Activated CD4-positive, alpha-beta T cell treated with anti-CD3 and anti-CD28 coated beads, Interleukin-2, amount 10 ng/mL, durations not matched to agents 24 days and 14 days (primary cell): ENCODE measurements at regions of chr14 and their contacts with region 1.

Region 1: DNA sequence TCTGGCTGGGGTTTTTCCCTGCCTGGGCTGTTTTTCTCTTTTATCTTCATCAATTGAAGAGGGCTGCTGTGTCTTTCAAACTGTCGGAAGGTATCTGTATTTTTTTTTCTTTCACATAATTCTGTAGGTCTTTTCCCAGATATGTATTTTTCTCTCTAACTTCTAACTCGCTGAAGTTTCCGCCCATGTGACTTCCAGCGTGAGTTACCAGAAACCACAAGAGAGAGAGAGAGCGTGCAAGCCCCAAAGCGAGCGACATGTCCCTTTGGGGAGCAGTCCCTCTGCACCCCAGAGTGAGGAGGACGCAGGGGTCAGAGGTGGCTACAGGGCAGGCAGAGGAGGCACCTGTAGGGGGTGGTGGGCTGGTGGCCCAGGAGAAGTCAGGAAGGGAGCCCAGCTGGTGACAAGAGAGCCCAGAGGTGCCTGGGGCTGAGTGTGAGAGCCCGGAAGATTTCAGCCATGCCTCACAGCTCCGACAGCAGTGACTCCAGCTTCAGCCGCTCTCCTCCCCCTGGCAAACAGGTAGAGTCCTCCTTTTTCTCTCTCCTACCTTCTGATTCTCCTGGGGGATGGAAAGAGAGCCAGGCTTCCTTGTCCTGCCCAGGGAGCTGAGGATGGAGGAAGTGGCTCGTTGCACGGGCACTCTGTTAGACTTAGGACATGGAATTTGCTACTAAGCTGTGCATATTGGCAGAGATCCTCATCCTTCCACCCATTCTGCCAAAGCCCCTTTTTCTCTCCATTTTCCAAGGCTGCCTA is at the start of gene BATF:
- DNase-seq: peak; percentile 95
- H3K4me3 Mint-ChIP-seq: peak within 1 kb of the TSS; percentile 100
- H3K27ac Mint-ChIP-seq: peak within 1 kb of the TSS; percentile 100
- H3K4me1 Mint-ChIP-seq: peaks cover 63% of the 10 kb centered on the region
- H3K27me3 Mint-ChIP-seq: no peaks in the 10 kb centered on the region
- total RNA-seq, gene BATF: 175 and 178 TPM in 2 replicates

Region 2: GRCh38 chr14:75469606-75470237 is 52.7 kb before region 1 on chr14:
- intact Hi-C with region 1: no loop called
- DNase-seq: no peak
- H3K4me3 Mint-ChIP-seq: no peak overlapping the region
- H3K27ac Mint-ChIP-seq: no peak overlapping the region
- H3K4me1 Mint-ChIP-seq: peaks cover 6% of the 10 kb centered on the region
- H3K27me3 Mint-ChIP-seq: no peaks in the 10 kb centered on the region

Region 3: DNA sequence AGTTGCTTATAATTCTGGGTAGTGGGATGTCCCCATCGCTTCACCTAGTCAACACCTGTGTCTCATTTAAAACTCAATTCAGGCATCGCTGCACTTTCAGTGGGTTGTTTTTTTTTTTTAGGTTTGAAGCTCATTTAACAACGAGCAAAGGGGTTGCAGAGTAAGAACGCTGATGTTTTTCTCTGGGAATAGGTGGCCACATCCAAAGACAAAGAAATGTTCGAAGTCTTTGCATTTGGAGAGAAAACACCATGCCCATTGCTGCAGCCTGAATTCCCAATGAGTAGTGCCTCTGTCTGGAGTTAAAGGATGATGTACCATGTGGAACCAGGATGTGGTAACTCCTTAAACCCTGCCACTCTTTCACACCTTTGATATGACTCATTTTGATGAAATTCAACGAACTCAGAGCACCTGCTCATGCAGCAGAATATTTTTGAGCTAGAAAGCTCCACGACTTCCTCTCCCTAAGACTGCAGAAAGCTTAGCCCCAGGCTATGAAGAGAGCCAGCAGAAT is 35.2 kb before region 1 on chr14:
- intact Hi-C with region 1: loop called (anchors 5 kb)
- DNase-seq: peak; percentile 75
- H3K4me3 Mint-ChIP-seq: peak overlapping the region; percentile 22
- H3K27ac Mint-ChIP-seq: peak overlapping the region; percentile 65
- H3K4me1 Mint-ChIP-seq: peaks cover 27% of the 10 kb centered on the region
- H3K27me3 Mint-ChIP-seq: peaks cover 2% of the 10 kb centered on the region

Region 4: DNA sequence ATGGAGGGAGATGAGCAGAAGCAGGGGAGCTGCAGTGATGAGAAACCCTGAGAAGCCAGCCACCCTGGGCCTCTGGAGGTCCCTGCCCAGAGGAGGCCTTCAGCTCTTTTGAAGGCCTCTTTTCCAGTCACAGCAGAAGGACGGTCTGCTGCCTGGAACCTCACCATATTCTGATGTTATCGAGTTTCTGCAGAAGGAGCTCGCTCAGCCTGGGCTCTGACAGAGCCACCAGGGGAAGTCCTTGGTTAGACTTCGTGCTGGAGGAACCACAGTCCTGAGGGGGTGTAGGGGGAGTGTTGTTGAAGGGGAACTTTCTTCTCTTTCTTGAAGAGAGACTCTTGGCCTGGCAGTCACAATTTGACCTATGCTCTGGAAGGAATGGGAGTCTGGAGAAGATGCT is 25.2 kb before region 1 on chr14:
- intact Hi-C with region 1: loop called (anchors 1 kb)
- DNase-seq: peak; percentile 84
- H3K4me3 Mint-ChIP-seq: peak overlapping the region; percentile 76
- H3K27ac Mint-ChIP-seq: peak overlapping the region; percentile 90
- H3K4me1 Mint-ChIP-seq: peaks cover 48% of the 10 kb centered on the region
- H3K27me3 Mint-ChIP-seq: no peaks in the 10 kb centered on the region

Region 5: GRCh38 chr14:75542588-75543091 is 20.2 kb after region 1 on chr14:
- intact Hi-C with region 1: loop called (anchors 1 kb)
- DNase-seq: peak; percentile 94
- H3K4me3 Mint-ChIP-seq: peak overlapping the region; percentile 67
- H3K27ac Mint-ChIP-seq: peak overlapping the region; percentile 96
- H3K4me1 Mint-ChIP-seq: peaks cover 70% of the 10 kb centered on the region
- H3K27me3 Mint-ChIP-seq: no peaks in the 10 kb centered on the region

Region 6: GRCh38 chr14:75560962-75561432 is 38.6 kb after region 1 on chr14:
- intact Hi-C with region 1: loop called (anchors 1 kb)
- DNase-seq: peak; percentile 84
- H3K4me3 Mint-ChIP-seq: peak overlapping the region; percentile 63
- H3K27ac Mint-ChIP-seq: peak overlapping the region; percentile 98
- H3K4me1 Mint-ChIP-seq: peaks cover 61% of the 10 kb centered on the region
- H3K27me3 Mint-ChIP-seq: no peaks in the 10 kb centered on the region

Region 7: GRCh38 chr14:75566321-75566720 is 43.9 kb after region 1 on chr14:
- intact Hi-C with region 1: loop called (anchors 1 kb)
- DNase-seq: peak; percentile 90
- H3K4me3 Mint-ChIP-seq: peak overlapping the region; percentile 50
- H3K27ac Mint-ChIP-seq: peak overlapping the region; percentile 89
- H3K4me1 Mint-ChIP-seq: peaks cover 53% of the 10 kb centered on the region
- H3K27me3 Mint-ChIP-seq: no peaks in the 10 kb centered on the region

Region 8: DNA sequence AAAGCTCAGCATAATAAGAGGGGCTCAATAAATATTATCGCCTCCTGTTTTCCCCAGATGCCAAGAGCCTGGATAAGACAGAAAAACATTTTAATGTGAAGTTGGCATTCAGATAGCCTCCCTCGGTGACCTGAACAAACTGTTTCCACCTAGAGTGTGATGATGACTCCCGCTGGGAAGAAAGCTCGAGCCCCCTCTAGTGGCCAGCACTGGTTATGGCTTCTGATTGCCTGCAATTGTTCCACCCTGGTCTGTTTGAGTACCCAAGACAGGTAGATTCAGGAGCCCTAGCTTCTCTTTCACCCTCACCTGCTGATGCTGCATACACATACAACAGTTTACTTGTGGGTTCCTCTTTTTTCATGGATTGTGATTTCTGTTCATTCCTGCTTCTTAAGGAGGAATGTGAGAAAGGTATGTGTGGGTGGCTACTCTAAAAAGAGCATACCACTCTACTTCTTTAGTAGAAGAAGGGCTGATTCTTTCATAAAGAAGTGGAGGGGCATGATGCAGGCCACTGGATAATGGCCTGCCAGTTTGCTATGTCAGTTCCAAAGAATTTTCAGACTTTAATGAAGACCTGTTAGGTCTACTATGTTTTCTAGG is 131.8 kb after region 1 on chr14:
- intact Hi-C with region 1: loop called (anchors 2 kb)
- DNase-seq: peak; percentile 95
- H3K4me3 Mint-ChIP-seq: no peak overlapping the region
- H3K27ac Mint-ChIP-seq: no peak overlapping the region
- H3K4me1 Mint-ChIP-seq: peaks cover 6% of the 10 kb centered on the region
- H3K27me3 Mint-ChIP-seq: no peaks in the 10 kb centered on the region